ENCODE measurements at regions of chr19 and their contacts with region 1.

Region 1: DNA sequence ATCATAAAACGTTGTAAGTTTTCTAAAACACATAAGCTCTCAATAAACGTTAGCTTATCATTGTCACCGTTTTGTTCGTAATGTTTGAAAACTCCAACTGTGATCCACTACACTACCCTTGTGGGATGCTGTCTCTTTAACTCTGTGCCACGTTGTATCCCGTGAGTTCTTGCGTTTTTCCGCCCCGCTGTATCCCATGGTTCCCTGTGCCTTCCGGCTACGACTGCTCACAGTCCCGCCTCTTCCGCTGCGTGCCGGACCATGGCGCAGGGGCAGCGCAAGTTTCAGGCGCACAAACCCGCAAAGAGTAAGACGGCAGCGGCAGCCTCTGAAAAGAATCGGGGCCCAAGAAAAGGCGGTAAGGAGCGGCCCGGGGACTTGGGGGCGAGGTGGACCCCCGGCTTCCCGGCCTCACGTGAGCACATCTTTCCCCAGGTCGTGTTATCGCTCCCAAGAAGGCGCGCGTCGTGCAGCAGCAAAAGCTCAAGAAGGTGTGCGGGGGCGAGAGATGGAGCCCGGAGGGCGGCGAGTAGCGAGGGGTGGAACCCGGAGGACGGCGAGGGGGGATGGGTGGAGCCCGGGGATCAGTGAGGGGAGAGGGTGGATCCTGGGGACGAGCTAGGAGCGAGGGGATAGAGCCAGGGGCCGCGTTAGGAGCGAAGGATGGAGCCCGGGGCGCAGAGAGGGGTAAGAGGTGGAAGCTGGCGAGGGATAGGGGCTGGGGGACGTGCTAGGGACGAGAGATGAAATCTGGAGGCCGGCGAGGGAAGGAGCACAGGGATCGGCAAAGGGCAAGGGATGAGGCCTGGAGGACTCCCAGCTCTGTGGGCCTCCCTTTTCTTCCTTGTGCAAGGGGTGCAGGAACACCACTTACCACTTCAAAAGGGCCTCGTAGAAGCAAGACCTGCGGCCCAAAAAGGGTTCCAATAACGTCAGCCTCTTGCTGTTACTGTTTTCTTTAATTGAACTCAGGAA is at the start of gene C19orf53:
- DNase-seq: peak; percentile 93
- H3K4me3 ChIP-seq: peak within 1 kb of the TSS; percentile 74 to 94
- H3K27ac ChIP-seq: peak within 1 kb of the TSS; percentile 83 to 91
- H3K4me1 ChIP-seq: peaks cover 6 to 8% of the 10 kb centered on the region in 2 experiments; a peak in 2 of 4 replicates
- H3K27me3 ChIP-seq: no peaks in the 10 kb centered on the region
- CTCF ChIP-seq: no peak
- EP300 ChIP-seq: no peak
- RAD21 ChIP-seq: no peak
- polyA plus RNA-seq, gene C19orf53: 470 and 554 TPM in 2 replicates

Region 2: DNA sequence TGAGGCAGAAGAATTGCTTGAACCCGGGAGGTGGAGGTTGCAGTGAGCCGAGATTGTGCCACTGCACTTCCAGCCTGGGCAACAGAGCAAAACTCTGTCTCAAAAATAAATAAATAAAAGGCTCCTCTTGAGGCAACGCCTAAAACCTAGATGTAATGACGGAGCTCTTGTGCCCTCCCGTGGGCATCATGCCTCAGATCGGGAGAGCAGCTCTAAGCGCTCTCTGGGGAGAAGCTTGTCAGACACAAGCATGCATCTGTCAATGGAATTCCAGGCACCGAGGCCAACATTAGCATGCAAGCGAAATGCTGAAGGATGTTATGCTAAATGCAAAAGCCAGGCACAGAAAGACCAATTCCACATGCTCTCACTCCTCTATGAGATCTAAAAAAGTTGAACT is 55.8 kb before region 1 on chr19:
- CTCF ChIA-PET with region 1: no interaction called
- POLR2A ChIA-PET with region 1: no interaction called
- DNase-seq: peak; percentile 28
- H3K4me3 ChIP-seq: no peak overlapping the region
- H3K27ac ChIP-seq: no peak overlapping the region
- H3K4me1 ChIP-seq: no peaks in the 10 kb centered on the region
- H3K27me3 ChIP-seq: no peaks in the 10 kb centered on the region; the same call in 1 of the 2 replicates
- CTCF ChIP-seq: peak; percentile 63
- EP300 ChIP-seq: no peak
- RAD21 ChIP-seq: peak; percentile 61

Region 3: GRCh38 chr19:13764101-13764807 is 10.2 kb before region 1 on chr19 and contains the start of gene MRI1:
- CTCF ChIA-PET with region 1: interaction called, 3 read pairs
- POLR2A ChIA-PET with region 1: interaction called, 23 read pairs
- DNase-seq: peak; percentile 97
- H3K4me3 ChIP-seq: peak within 1 kb of the TSS; percentile 63 to 69
- H3K27ac ChIP-seq: peak within 1 kb of the TSS; percentile 42 to 66; a peak in 2 of 4 replicates
- H3K4me1 ChIP-seq: peaks cover 5 to 11% of the 10 kb centered on the region in 2 experiments; a peak in 2 of 4 replicates
- H3K27me3 ChIP-seq: no peaks in the 10 kb centered on the region
- CTCF ChIP-seq: no peak; the same call in 1 of the 2 replicates
- EP300 ChIP-seq: no peak
- RAD21 ChIP-seq: no peak
- polyA plus RNA-seq, gene MRI1: 49.6 and 56.8 TPM in 2 replicates

Region 4: GRCh38 chr19:13825489-13826391 is 51.2 kb after region 1 on chr19:
- CTCF ChIA-PET with region 1: no interaction called
- POLR2A ChIA-PET with region 1: no interaction called
- DNase-seq: peak; percentile 80
- H3K4me3 ChIP-seq: no peak overlapping the region
- H3K27ac ChIP-seq: no peak overlapping the region
- H3K4me1 ChIP-seq: peaks cover 0 to 8% of the 10 kb centered on the region in 2 experiments; a peak in 2 of 4 replicates
- H3K27me3 ChIP-seq: no peaks in the 10 kb centered on the region
- CTCF ChIP-seq: peak; percentile 38; the same call in 1 of the 2 replicates
- EP300 ChIP-seq: no peak
- RAD21 ChIP-seq: no peak